ENCODE measurements at regions of chr15 and their contacts with region 1.

Region 1: DNA sequence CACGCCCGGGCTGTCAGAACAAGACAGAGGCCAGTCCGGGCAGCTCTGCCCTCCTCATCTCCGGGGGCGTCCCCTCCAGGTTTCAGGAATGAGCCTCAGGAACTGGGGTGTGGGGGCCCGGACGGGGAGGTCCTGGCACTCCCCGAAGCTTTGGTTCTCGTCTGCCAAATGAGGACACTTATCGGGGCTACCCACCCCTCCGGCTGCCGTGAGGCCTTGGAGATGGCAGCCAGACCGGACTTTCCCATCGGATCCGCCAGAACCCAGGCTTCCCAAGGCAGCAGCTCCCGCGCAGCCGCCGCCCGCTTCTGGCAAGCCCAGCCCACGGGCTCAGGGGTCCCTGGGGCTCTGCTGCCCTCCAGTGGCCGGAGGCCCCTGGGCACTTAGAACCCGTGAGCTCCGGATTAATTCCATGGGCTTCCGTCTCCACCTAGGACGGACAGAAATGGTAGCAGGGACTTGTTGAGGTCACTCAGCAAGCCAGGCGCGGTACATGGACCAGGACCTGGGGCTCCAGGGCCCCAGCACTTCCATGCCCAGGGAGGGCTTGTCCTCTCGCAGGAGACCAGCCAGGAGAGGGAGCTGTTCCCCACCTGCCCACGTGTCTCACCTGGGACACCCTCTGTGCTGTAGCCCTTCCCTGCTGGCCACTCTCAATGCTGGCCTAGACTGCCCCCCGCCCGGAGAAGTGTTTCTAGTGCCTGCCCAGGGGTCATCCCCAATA is 89.4 kb downstream of the LINGO1 start:
- DNase-seq: peak; percentile 72 to 93
- H3K4me3 ChIP-seq: peak overlapping the region in 1 of 4 experiments; percentile 15; a peak in 1 of 8 replicates
- H3K27ac ChIP-seq: no peak overlapping the region
- H3K4me1 ChIP-seq: peaks cover 2 to 15% (median 6%) of the 10 kb centered on the region in 4 experiments
- H3K27me3 ChIP-seq: no peaks in the 10 kb centered on the region
- CTCF ChIP-seq: peak; percentile 64 to 96 (median 95)
- EP300 ChIP-seq: no peak
- POLR2A ChIP-seq: no peak
- RAD21 ChIP-seq: peak; percentile 99

Region 2: GRCh38 chr15:77099741-77100463 is 443.4 kb before region 1 on chr15:
- CTCF ChIA-PET with region 1: interaction called, 43 read pairs
- POLR2A ChIA-PET with region 1: no interaction called
- DNase-seq: no peak
- H3K4me3 ChIP-seq: no peak overlapping the region
- H3K27ac ChIP-seq: no peak overlapping the region
- H3K4me1 ChIP-seq: peaks cover 0 to 3% (median 0%) of the 10 kb centered on the region in 4 experiments; a peak in 1 of 7 replicates
- H3K27me3 ChIP-seq: no peaks in the 10 kb centered on the region
- CTCF ChIP-seq: no peak
- EP300 ChIP-seq: no peak
- POLR2A ChIP-seq: no peak
- RAD21 ChIP-seq: no peak

Region 3: GRCh38 chr15:77186594-77187011 is 356.7 kb before region 1 on chr15:
- CTCF ChIA-PET with region 1: interaction called, 156 read pairs
- POLR2A ChIA-PET with region 1: interaction called, 3 read pairs
- DNase-seq: no peak
- H3K4me3 ChIP-seq: no peak overlapping the region
- H3K27ac ChIP-seq: no peak overlapping the region
- H3K4me1 ChIP-seq: no peaks in the 10 kb centered on the region
- H3K27me3 ChIP-seq: no peaks in the 10 kb centered on the region
- CTCF ChIP-seq: peak in 2 of 3 experiments; percentile 42 to 65; a peak in 3 of 4 replicates
- EP300 ChIP-seq: no peak
- POLR2A ChIP-seq: no peak
- RAD21 ChIP-seq: peak; percentile 85 to 87

Region 4: GRCh38 chr15:77507911-77508310 is 35.4 kb before region 1 on chr15:
- CTCF ChIA-PET with region 1: interaction called, 28 read pairs
- POLR2A ChIA-PET with region 1: interaction called, 8 read pairs
- DNase-seq: no peak
- H3K4me3 ChIP-seq: no peak overlapping the region
- H3K27ac ChIP-seq: no peak overlapping the region
- H3K4me1 ChIP-seq: peaks cover 16 to 32% (median 27%) of the 10 kb centered on the region in 4 experiments
- H3K27me3 ChIP-seq: no peaks in the 10 kb centered on the region
- CTCF ChIP-seq: no peak
- EP300 ChIP-seq: no peak
- POLR2A ChIP-seq: no peak
- RAD21 ChIP-seq: no peak

Region 5: GRCh38 chr15:77557144-77557543 is 13.8 kb after region 1 on chr15:
- CTCF ChIA-PET with region 1: interaction called, 12 read pairs
- POLR2A ChIA-PET with region 1: interaction called, 3 read pairs
- DNase-seq: no peak
- H3K4me3 ChIP-seq: no peak overlapping the region
- H3K27ac ChIP-seq: no peak overlapping the region
- H3K4me1 ChIP-seq: peaks cover 0 to 9% (median 5%) of the 10 kb centered on the region in 4 experiments; a peak in 6 of 7 replicates
- H3K27me3 ChIP-seq: no peaks in the 10 kb centered on the region
- CTCF ChIP-seq: no peak
- EP300 ChIP-seq: no peak
- POLR2A ChIP-seq: no peak
- RAD21 ChIP-seq: no peak

Region 6: DNA sequence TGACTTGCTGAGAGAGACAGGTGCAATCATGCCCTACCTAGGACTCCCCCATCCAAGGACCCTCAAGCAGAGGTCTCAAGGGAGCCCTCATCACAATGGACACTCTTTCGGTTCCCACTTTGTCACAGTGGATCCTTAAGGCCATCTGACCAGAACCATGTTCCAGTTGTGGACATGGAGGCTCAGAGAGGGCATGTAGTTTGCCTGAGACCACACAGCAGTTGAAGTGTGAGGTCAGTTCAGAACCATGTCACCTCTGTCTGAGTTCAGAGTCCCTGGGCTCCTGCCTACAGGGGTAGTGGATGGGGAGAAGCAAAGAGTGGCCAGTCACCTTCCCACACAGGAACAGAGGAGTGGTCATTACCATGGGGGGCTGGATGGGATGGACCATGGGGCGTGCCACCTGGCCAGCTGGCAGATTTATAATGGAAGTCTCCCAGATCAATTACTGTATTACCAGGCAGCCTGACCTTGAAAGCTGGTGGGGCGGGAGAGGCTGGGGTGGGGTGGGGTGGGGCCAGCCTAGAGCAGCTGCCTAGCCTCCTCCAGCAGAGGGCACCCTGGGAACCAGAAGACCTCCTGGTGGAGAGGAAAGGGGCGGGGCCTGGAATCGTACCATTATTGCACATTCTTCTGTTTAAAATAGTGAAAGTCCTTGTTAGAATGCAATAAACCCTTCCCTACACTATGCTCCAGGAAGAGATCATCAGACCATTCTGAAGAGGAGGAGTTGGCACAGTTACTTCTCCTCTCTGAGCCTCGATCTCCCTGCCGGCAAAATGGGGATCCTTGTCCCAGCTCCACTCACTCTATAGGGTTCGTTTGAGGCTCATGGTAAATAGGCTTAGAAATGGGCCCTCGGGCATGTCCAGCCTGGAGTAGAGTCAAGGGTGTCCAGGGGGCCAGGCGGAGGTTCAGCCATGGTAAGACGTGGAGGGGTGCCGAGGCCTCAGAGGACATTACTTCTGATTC is 116.3 kb after region 1 on chr15:
- CTCF ChIA-PET with region 1: interaction called, 17 read pairs
- POLR2A ChIA-PET with region 1: no interaction called
- DNase-seq: peak in 1 of 2 experiments; percentile 76
- H3K4me3 ChIP-seq: no peak overlapping the region
- H3K27ac ChIP-seq: no peak overlapping the region
- H3K4me1 ChIP-seq: peaks cover 0 to 16% (median 10%) of the 10 kb centered on the region in 4 experiments; a peak in 5 of 7 replicates
- H3K27me3 ChIP-seq: no peaks in the 10 kb centered on the region
- CTCF ChIP-seq: peak; percentile 53 to 66 (median 55); a peak in 3 of 4 replicates
- EP300 ChIP-seq: no peak
- POLR2A ChIP-seq: no peak
- RAD21 ChIP-seq: peak; percentile 55 to 64

Region 7: GRCh38 chr15:77759896-77760592 is 216.7 kb after region 1 on chr15:
- CTCF ChIA-PET with region 1: no interaction called
- POLR2A ChIA-PET with region 1: no interaction called
- DNase-seq: no peak
- H3K4me3 ChIP-seq: no peak overlapping the region
- H3K27ac ChIP-seq: no peak overlapping the region
- H3K4me1 ChIP-seq: peaks cover 0 to 5% (median 5%) of the 10 kb centered on the region in 4 experiments; a peak in 6 of 7 replicates
- H3K27me3 ChIP-seq: no peaks in the 10 kb centered on the region
- CTCF ChIP-seq: no peak
- EP300 ChIP-seq: no peak
- POLR2A ChIP-seq: no peak
- RAD21 ChIP-seq: no peak

Region 8: DNA sequence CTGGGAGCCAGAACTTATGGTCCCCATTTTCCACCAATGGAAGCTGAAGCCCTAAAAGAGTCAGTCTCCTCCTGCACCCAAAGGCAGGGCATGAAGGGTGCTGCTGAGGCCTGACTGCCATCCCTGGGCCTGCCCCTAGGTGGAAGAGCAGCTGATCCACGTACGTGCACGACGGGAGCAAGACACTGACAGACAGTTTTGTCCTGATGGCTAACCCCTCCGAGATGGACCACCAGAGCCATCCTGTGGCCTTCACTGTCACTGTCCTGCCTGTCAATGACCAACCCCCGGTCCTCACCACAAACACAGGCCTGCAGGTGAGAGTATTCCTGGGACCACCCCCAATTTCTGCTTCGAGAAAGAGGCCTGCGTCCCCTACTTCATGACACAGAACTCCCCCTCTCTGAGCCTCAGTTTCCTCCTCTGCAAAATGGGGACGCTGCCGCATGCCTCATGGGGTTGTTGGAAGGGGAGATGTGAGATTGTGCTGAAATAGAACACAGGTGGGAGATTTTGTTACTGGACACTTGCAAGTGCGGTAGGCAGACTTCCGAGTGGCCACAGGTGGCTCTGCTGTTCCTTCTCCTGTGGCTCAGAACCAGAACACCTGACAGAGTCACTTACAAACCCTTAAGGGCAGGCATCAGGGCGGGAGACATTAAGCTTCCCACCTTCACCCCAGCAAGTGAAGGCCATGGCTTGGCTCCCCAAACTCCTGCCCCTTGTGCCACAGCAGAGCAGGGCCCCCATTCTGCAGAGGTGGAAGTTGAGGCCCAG is 358.8 kb after region 1 on chr15:
- CTCF ChIA-PET with region 1: no interaction called
- POLR2A ChIA-PET with region 1: no interaction called
- DNase-seq: no peak
- H3K4me3 ChIP-seq: no peak overlapping the region
- H3K27ac ChIP-seq: no peak overlapping the region
- H3K4me1 ChIP-seq: peaks cover 0 to 2% (median 0%) of the 10 kb centered on the region in 4 experiments; a peak in 2 of 7 replicates
- H3K27me3 ChIP-seq: no peaks in the 10 kb centered on the region
- CTCF ChIP-seq: peak; percentile 32 to 60 (median 49)
- EP300 ChIP-seq: no peak
- POLR2A ChIP-seq: no peak
- RAD21 ChIP-seq: no peak